ENCODE measurements at regions of chrX and their contacts with region 1.

Region 1: GRCh38 chrX:20531667-20532066 is 265.0 kb upstream of the RPS6KA3 start:
- DNase-seq: no peak
- H3K4me3 ChIP-seq: no peak overlapping the region
- H3K27ac ChIP-seq: no peak overlapping the region
- H3K4me1 ChIP-seq: peaks cover 0 to 8% (median 0%) of the 10 kb centered on the region in 4 experiments
- H3K27me3 ChIP-seq: peaks cover 2 to 19% (median 6%) of the 10 kb centered on the region in 5 experiments

Region 2: GRCh38 chrX:20432746-20433387 is 98.8 kb before region 1 on chrX:
- CTCF ChIA-PET with region 1: no interaction called
- POLR2A ChIA-PET with region 1: no interaction called
- DNase-seq: peak in 1 of 3 donors; percentile 23
- H3K4me3 ChIP-seq: no peak overlapping the region
- H3K27ac ChIP-seq: no peak overlapping the region
- H3K4me1 ChIP-seq: peaks cover 6 to 33% (median 10%) of the 10 kb centered on the region in 4 experiments
- H3K27me3 ChIP-seq: no peaks in the 10 kb centered on the region

Region 3: GRCh38 chrX:21479695-21480270 is 948.1 kb after region 1 on chrX:
- CTCF ChIA-PET with region 1: interaction called, 14 read pairs
- POLR2A ChIA-PET with region 1: no interaction called
- DNase-seq: peak; percentile 47 to 76 (median 68)
- H3K4me3 ChIP-seq: no peak overlapping the region
- H3K27ac ChIP-seq: no peak overlapping the region
- H3K4me1 ChIP-seq: no peaks in the 10 kb centered on the region
- H3K27me3 ChIP-seq: no peaks in the 10 kb centered on the region

Measured in common myeloid progenitor, CD34-positive (primary cell).